ENCODE measurements at regions of chr14 and their contacts with region 1.

Region 1: GRCh38 chr14:21502926-21503325 is 8.2 kb downstream of the METTL3 start:
- DNase-seq: no peak
- H3K4me3 ChIP-seq: no peak overlapping the region
- H3K27ac ChIP-seq: peak overlapping the region in 1 of 8 donors; percentile 8
- H3K4me1 ChIP-seq: peaks cover 7 to 53% (median 16%) of the 10 kb centered on the region in 6 donors
- H3K27me3 ChIP-seq: no peaks in the 10 kb centered on the region
- CTCF ChIP-seq: no peak
- POLR2A ChIP-seq: no peak

Region 2: GRCh38 chr14:21557084-21557901 is 54.4 kb after region 1 on chr14:
- intact Hi-C with region 1: loop called (anchors 5 kb)
- DNase-seq: peak; percentile 40
- H3K4me3 ChIP-seq: peak overlapping the region in 4 of 8 donors; percentile 18 to 59 (median 24)
- H3K27ac ChIP-seq: peak overlapping the region in 5 of 8 donors; percentile 26 to 53 (median 38)
- H3K4me1 ChIP-seq: peaks cover 0 to 13% (median 8%) of the 10 kb centered on the region in 6 donors
- H3K27me3 ChIP-seq: no peaks in the 10 kb centered on the region
- CTCF ChIP-seq: peak in 10 of 11 experiments; percentile 50 to 82 (median 72)
- POLR2A ChIP-seq: no peak

Region 3: DNA sequence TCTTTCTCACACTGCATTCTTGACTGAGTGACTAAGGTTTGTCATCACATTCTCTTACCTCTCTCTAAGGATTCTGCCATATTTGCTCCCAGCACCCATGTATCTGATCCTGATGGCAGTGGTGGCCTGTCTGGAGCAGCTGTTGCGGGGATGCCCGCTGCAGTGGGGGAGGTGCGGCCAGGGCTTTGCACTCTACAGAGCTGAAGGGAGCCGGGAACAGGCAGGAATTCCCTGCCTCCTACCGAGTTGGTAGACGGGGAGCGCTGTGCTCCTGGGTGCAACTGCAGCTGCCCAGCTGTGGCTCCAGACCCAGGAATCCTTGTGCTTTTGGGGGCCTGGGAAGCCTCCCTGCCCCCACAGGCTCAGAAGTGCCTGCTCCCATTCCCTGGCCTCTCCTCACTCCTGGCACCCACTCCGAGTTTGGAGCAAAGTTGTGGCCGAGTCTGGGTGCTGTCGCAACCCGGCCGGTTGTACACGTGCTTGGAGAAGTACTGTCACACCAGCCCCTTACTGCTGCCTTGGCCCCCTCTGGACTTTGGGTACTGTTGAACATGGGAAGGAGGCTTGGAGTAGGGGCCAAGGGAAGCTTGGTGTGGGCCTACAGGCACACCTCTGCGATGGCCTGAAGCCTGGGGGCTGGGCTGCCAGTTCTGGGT is 277.6 kb after region 1 on chr14:
- intact Hi-C with region 1: no loop called
- DNase-seq: no peak
- H3K4me3 ChIP-seq: no peak overlapping the region
- H3K27ac ChIP-seq: no peak overlapping the region
- H3K4me1 ChIP-seq: no peaks in the 10 kb centered on the region
- H3K27me3 ChIP-seq: peaks cover 0 to 20% (median 0%) of the 10 kb centered on the region in 7 donors
- CTCF ChIP-seq: no peak
- POLR2A ChIP-seq: no peak